ENCODE measurements at regions of chr17 and their contacts with region 1.

Region 1: DNA sequence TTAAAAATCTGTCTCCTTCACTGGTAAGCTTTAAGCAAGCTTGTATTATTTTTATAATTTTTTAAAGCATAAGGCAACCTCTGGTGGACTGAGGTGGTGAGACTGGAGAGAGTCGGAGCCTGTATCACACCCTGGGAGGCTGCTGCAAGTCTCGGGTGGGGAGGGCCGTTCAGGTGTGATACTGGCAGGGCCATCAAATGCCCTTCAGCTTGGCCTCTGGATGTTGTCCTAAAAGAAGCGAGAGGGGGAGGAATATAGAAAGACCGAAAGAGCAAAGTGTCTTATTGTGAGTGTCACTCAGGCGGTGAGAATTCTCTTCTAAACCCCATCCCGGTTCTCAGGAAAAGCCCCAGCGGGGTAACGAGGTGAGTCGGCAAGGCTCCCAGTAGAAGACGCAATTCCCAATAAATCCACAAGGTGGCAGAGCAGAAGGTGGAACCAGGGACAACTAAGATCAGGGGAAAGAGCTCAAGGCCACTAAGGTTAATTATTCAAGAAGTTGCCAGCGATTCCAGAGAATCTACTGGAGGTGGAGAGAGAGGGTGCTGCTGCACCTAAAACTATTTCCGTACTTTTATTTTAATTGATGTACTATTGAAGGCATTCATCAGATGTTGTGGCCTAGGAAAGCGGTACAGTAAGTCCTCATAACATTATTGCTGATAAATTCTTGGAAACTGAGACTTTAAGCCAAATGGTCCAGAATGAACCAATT is 14.1 kb downstream of the C17orf67 start:
- DNase-seq: peak; percentile 62 to 93
- H3K4me3 ChIP-seq: no peak overlapping the region
- H3K27ac ChIP-seq: no peak overlapping the region
- H3K4me1 ChIP-seq: no peaks in the 10 kb centered on the region
- H3K27me3 ChIP-seq: no peaks in the 10 kb centered on the region
- CTCF ChIP-seq: peak; percentile 56 to 77 (median 76)
- EP300 ChIP-seq: no peak
- POLR2A ChIP-seq: no peak
- RAD21 ChIP-seq: peak; percentile 72 to 81

Region 2: GRCh38 chr17:56833809-56834379 is 14.3 kb after region 1 on chr17 and contains the starts of genes C17orf67 and DGKE:
- CTCF ChIA-PET with region 1: interaction called, 17 read pairs
- POLR2A ChIA-PET with region 1: interaction called, 4 read pairs
- DNase-seq: peak; percentile 85 to 98
- H3K4me3 ChIP-seq: peak within 1 kb of the TSS; percentile 59 to 77 (median 74)
- H3K27ac ChIP-seq: no peak within 1 kb of the TSS; the same call in 1 of the 2 replicates
- H3K4me1 ChIP-seq: peaks cover 0 to 9% (median 5%) of the 10 kb centered on the region in 4 experiments; a peak in 5 of 7 replicates
- H3K27me3 ChIP-seq: peaks cover 0 to 8% (median 6%) of the 10 kb centered on the region in 4 experiments; a peak in 6 of 7 replicates
- CTCF ChIP-seq: no peak
- EP300 ChIP-seq: no peak
- POLR2A ChIP-seq: 0 out of 3 replicates have a peak, but pooled peaks of 1 of the 2 experiments have one; percentile 8
- RAD21 ChIP-seq: no peak
- total RNA-seq, gene C17orf67: 1.9 and 2.2 TPM in 2 replicates
- total RNA-seq, gene DGKE: 7.4 and 7.7 TPM in 2 replicates

Region 3: GRCh38 chr17:57016747-57017082 is 197.1 kb after region 1 on chr17:
- CTCF ChIA-PET with region 1: no interaction called
- POLR2A ChIA-PET with region 1: no interaction called
- DNase-seq: no peak
- H3K4me3 ChIP-seq: no peak overlapping the region
- H3K27ac ChIP-seq: no peak overlapping the region
- H3K4me1 ChIP-seq: peaks cover 10 to 22% (median 19%) of the 10 kb centered on the region in 4 experiments
- H3K27me3 ChIP-seq: 0 out of 7 replicates have a peak, but pooled peaks cover 0 to 4% (median 0%) of the 10 kb centered on the region in 4 experiments
- CTCF ChIP-seq: no peak
- EP300 ChIP-seq: no peak
- POLR2A ChIP-seq: no peak
- RAD21 ChIP-seq: no peak

Measured in H1 (cell line).